Heart left ventricle (tissue), 16 donors: ENCODE measurements at regions of chr12 and their contacts with region 1.

Region 1: DNA sequence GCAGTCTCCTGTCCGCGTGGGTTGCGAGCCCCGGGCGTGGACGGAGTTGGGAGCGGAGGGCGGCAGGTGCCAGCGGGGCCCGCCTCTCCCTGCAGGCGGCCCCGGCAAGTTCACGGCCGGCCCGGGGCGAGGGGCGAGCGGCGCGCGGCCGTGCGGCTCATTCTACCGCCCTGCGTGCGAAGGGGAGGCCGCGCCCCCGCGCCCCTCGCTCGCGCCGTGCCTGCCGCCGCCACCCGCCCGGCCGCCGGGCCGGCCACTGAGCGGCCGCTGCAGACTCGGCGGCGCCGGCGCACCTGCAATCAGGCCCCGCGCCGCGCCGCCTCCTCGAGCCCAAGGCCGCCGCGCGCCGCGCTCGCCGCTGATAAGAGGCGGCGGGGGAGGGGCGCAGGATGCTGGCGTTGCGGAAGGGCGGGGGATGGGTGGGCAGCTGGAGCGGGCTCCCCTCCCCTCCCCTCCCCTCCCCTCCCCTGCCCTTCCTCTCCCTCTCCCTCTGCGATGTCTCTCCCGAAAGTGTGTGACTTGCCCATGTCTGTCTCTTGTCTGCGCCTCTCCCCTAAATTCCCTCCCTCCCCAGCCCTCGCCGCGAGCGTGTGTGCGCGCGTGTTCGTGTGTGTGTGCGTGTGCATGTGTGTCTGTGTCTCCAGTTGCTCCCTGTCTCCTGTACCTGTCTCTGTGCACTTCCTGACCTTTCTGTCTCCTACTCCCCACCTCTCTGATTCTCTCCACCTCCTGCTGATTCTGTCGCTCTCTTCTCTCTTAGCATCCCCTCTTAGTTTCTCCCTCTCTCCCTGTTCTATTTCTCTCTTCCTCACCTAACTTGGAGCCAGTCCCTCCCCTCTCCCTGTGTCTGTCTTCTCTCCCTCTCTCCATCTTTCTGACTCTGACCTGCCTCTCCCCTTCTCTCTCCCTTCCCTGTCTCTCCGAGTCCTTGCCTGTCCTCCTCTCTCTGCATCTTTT is 768.1 kb upstream of the TBX3 start:
- DNase-seq: peak; percentile 61 to 71 (median 70)
- ATAC-seq: peak in 3 of 4 donors; percentile 65 to 78 (median 73)
- H3K4me3 ChIP-seq: peak overlapping the region in 10 of 12 donors; percentile 21 to 54 (median 38)
- H3K27ac ChIP-seq: peak overlapping the region in 9 of 12 donors; percentile 16 to 85 (median 66)
- H3K4me1 ChIP-seq: peaks cover 0 to 30% (median 8%) of the 10 kb centered on the region in 12 donors
- H3K27me3 ChIP-seq: peaks cover 0 to 13% (median 0%) of the 10 kb centered on the region in 9 donors
- CTCF ChIP-seq: no peak
- POLR2A ChIP-seq: no peak

Region 2: DNA sequence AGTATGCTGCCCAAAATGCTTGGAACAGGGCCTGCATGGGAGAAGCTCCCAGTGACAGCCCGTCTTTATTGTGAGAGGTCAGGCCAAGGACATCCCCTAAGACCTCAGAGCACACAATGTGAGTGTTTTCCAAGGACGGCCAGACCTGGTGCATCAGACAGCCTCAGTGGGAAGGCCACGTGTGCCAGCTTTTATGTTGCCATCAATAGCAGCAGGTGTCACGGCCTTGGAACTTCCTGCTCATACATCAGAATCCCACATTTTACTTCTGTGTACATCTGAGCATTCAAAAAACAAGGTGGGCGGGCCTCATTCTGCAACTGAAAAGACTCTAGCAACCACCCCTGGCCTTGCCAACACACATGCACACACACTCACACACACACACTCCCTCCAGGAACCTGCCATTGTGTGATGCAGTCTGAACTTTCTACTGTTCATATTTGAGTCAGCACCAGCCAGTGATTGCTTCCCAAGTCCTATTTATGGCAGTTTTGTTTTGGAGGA is 14.9 kb before region 1 on chr12:
- intact Hi-C with region 1: loop called in 1 of 10 experiments (anchors 1 kb)
- DNase-seq: peak in 4 of 5 donors; percentile 34 to 74 (median 67)
- ATAC-seq: peak in 3 of 4 donors; percentile 53 to 69 (median 64)
- H3K4me3 ChIP-seq: no peak overlapping the region
- H3K27ac ChIP-seq: peak overlapping the region in 10 of 12 donors; percentile 0 to 69 (median 40)
- H3K4me1 ChIP-seq: peaks cover 0 to 31% (median 10%) of the 10 kb centered on the region in 12 donors
- H3K27me3 ChIP-seq: no peaks in the 10 kb centered on the region
- CTCF ChIP-seq: no peak
- POLR2A ChIP-seq: no peak

Region 3: DNA sequence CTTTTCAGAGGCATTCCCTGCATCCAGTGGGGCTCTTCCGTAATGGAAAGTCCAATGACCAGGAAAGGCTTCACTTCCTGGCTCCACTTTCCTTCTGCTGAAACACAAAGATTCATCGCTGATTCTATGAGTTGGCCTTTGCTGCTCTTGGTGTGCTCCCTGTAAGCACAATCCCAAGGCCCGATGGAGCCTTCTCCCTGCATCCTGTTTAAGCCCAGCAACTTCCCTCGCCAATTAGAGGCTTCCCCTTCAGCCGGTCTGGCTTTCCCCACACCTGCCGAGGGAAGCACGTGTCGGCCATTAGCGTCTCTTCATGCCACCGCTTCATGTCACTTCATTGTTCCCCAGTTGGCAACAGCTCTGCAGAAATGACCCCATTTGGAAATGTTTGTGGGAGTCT is 131.5 kb after region 1 on chr12:
- intact Hi-C with region 1: loop called in 1 of 10 experiments (anchors 10 kb)
- DNase-seq: no peak
- ATAC-seq: peak in 1 of 4 donors; percentile 42
- H3K4me3 ChIP-seq: no peak overlapping the region
- H3K27ac ChIP-seq: no peak overlapping the region
- H3K4me1 ChIP-seq: peaks cover 0 to 13% (median 0%) of the 10 kb centered on the region in 12 donors
- H3K27me3 ChIP-seq: peaks cover 0 to 3% (median 0%) of the 10 kb centered on the region in 9 donors
- CTCF ChIP-seq: no peak
- POLR2A ChIP-seq: no peak

Region 4: DNA sequence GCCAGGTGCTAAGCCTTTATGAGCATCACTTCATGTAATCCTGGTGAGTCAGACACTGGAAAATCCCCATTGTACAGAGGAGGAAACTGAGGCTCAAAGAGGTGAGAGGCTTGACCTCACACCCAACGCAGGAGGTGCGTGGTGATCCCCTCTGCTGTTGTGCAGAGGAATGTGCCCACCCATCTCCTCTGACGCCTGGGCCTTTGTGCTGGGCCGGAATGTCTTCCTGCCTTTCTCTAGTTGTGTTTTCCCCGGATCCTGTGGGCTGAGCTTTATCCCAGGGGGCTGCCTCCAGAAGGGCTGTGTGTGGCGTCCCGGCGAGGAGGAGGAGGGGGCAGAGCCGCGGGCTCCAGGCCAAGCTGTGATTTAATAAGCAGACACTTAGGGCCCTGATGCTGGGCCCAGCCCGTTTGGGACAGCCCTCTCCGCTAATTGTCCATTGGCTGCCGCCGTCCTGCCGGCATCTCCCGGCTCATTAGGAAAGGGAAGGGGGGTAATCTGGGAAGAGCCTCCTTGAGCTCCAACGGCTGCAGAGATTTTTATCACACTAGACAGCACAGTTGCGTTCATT is 171.8 kb after region 1 on chr12:
- intact Hi-C with region 1: loop called in 2 of 10 experiments (anchors 5 to 10 kb)
- DNase-seq: peak; percentile 81 to 88 (median 86)
- ATAC-seq: peak; percentile 87 to 97 (median 88)
- H3K4me3 ChIP-seq: no peak overlapping the region
- H3K27ac ChIP-seq: peak overlapping the region in 7 of 12 donors; percentile 24 to 70 (median 56)
- H3K4me1 ChIP-seq: peaks cover 0 to 11% (median 0%) of the 10 kb centered on the region in 12 donors
- H3K27me3 ChIP-seq: peaks cover 0 to 5% (median 0%) of the 10 kb centered on the region in 9 donors
- CTCF ChIP-seq: no peak
- POLR2A ChIP-seq: no peak